ENCODE measurements at regions of chr15 and their contacts with region 1.

Region 1: DNA sequence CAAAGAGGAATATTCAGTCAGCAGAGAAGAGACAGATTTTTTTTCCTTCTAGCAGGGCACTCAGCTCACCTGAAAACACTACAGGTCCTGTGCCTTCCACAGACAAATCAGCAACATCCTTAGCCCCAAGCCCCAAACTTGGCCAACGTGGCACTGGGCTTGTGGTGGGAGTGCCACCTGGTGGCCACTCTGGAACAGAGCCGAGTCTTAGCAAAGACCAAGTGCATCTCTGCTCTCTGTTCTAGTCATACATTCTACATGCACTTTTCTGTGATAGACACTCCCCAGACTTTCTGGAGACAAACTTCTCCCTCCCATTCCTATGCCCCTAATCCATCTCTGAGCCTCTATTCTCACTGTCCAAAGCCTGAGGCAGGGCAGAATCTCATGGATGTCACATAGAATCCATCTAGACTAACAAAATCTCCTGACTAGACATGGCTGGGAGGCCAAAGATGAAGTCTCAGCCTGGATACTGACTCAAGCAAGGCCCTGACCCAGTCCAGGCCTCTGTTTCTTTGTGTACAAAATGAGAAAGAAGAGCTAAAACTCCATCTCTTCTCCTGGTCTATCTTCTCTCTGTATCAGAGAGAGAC is 5.1 kb upstream of the SEMA7A start:
- DNase-seq: peak in 1 of 2 experiments; percentile 80
- H3K4me3 ChIP-seq: no peak overlapping the region
- H3K27ac ChIP-seq: no peak overlapping the region
- H3K4me1 ChIP-seq: peaks cover 0 to 5% (median 3%) of the 10 kb centered on the region in 4 experiments; a peak in 6 of 7 replicates
- H3K27me3 ChIP-seq: peaks cover 0 to 5% (median 0%) of the 10 kb centered on the region in 4 experiments; a peak in 3 of 7 replicates
- CTCF ChIP-seq: peak; percentile 94 to 99 (median 97)
- EP300 ChIP-seq: no peak
- POLR2A ChIP-seq: no peak
- RAD21 ChIP-seq: peak; percentile 96 to 98

Region 2: GRCh38 chr15:74396445-74397238 is 42.2 kb before region 1 on chr15:
- CTCF ChIA-PET with region 1: interaction called, 1,311 read pairs
- POLR2A ChIA-PET with region 1: interaction called, 3 read pairs
- DNase-seq: no peak
- H3K4me3 ChIP-seq: no peak overlapping the region
- H3K27ac ChIP-seq: no peak overlapping the region
- H3K4me1 ChIP-seq: peaks cover 0 to 12% (median 7%) of the 10 kb centered on the region in 4 experiments; a peak in 4 of 7 replicates
- H3K27me3 ChIP-seq: no peaks in the 10 kb centered on the region
- CTCF ChIP-seq: no peak
- EP300 ChIP-seq: no peak
- POLR2A ChIP-seq: no peak
- RAD21 ChIP-seq: no peak

Region 3: GRCh38 chr15:74428442-74428787 is 10.4 kb before region 1 on chr15:
- CTCF ChIA-PET with region 1: interaction called, 66 read pairs
- POLR2A ChIA-PET with region 1: interaction called, 5 read pairs
- DNase-seq: no peak
- H3K4me3 ChIP-seq: no peak overlapping the region
- H3K27ac ChIP-seq: no peak overlapping the region
- H3K4me1 ChIP-seq: peaks cover 0 to 13% (median 5%) of the 10 kb centered on the region in 4 experiments; a peak in 6 of 7 replicates
- H3K27me3 ChIP-seq: peaks cover 0 to 12% (median 9%) of the 10 kb centered on the region in 4 experiments; a peak in 5 of 7 replicates
- CTCF ChIP-seq: no peak
- EP300 ChIP-seq: no peak
- POLR2A ChIP-seq: no peak
- RAD21 ChIP-seq: no peak

Region 4: DNA sequence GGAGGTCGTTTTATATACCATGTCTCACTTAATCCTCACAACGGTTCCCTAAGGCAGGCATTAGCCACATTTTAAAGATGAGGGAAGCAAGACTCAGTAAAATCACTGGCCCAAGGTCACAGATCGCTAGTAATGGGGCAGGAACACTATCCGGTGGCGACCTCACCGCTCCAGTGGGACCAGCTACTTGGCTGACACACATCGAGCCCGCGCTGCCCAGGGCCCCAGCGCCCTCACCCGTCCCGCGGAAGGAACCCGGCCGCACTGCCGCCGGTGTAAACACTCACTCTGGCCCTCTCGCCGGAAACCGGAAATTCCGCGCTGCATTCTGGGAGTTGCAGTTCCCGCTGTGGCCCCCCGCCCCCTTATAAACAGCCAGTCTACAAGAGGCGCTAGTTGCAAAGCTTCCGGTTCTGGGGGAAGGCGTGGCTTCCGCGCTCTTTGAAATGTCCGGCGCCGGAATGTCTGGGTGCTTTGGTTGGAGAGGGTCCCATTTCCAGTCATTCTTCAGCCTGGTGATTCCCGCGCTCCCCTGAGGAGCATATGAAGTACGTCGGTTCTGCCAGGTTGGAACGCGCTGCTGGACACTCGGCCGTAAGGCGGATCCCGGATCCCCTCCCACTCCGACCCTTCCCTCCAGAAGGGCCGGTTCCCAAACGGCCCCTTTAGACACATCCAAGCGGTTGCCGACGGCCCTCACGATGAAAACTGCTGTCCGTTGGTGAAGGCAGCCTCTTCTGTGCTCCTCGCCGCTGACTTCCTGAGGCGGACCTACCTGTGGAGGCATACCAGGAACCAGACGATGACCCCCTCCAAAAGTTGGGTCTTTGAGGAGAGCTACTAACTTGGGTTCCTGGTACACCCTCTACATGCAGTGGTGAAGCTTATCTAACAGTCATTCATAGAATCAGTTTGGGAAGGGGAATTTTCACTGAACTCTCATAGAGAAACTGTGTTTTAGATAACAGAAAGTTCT is 22.3 kb after region 1 on chr15 and contains the start of gene UBL7:
- CTCF ChIA-PET with region 1: interaction called, 78 read pairs
- POLR2A ChIA-PET with region 1: interaction called, 14 read pairs
- DNase-seq: peak; percentile 87 to 98
- H3K4me3 ChIP-seq: peak within 1 kb of the TSS; percentile 79 to 97 (median 85)
- H3K27ac ChIP-seq: peak within 1 kb of the TSS; percentile 58
- H3K4me1 ChIP-seq: no peaks in the 10 kb centered on the region; a peak in 1 of 7 replicates
- H3K27me3 ChIP-seq: no peaks in the 10 kb centered on the region
- CTCF ChIP-seq: peak in 2 of 3 experiments; percentile 19 to 21; a peak in 3 of 4 replicates
- EP300 ChIP-seq: no peak
- POLR2A ChIP-seq: peak; percentile 91 to 98
- RAD21 ChIP-seq: peak; percentile 19 to 33; a peak in 3 of 4 replicates
- total RNA-seq, gene UBL7: 71.5 and 76.7 TPM in 2 replicates

Region 5: GRCh38 chr15:74489518-74490338 is 50.9 kb after region 1 on chr15:
- CTCF ChIA-PET with region 1: interaction called, 16 read pairs
- POLR2A ChIA-PET with region 1: no interaction called
- DNase-seq: peak; percentile 41 to 86
- H3K4me3 ChIP-seq: peak overlapping the region in 1 of 4 experiments; percentile 26; a peak in 1 of 8 replicates
- H3K27ac ChIP-seq: no peak overlapping the region
- H3K4me1 ChIP-seq: peaks cover 0 to 4% (median 4%) of the 10 kb centered on the region in 4 experiments; a peak in 5 of 7 replicates
- H3K27me3 ChIP-seq: no peaks in the 10 kb centered on the region
- CTCF ChIP-seq: peak; percentile 72 to 87 (median 76)
- EP300 ChIP-seq: no peak
- POLR2A ChIP-seq: peak in 1 of 2 experiments; percentile 39; a peak in 1 of 3 replicates
- RAD21 ChIP-seq: peak; percentile 68 to 72